ENCODE measurements at regions of chr19 and their contacts with region 1.

Region 1: DNA sequence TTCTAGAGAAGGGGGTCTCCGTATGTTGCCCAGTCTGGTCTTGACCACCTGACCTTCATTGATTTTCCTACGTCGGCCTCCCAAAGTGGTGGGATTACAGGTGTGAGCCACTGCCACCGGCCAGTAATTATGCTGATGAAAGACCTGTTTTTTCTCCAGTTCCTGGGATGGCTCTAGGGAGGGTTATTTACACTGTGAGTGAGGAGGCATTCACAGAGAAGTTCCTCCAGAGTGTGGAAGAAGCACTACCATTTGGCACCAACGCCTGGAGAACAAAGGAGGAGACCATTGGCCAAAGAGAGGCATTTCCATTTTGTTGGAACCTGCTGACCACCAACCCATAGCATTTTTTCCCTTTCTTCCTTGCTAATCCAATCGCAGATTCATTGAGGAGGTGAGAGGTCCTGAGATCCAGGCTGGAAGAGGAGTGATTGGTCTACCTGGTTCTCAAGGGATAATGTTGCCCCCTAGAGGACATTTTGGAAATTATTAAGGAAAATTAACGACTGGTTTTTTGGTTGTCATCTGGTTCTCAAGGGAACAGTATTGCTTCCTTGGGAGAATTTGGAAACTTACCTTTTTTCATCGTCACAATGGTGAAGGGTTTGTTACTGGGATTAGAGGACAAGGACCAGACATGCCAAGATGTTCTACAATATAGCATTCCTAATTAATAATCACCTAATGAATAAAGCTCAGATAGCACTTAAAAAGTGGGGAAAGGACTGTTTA is 5.5 kb upstream of the SAE1 start:
- DNase-seq: peak in 1 of 10 donors; percentile 16

Region 2: GRCh38 chr19:47035127-47036096 is 89.7 kb before region 1 on chr19:
- intact Hi-C with region 1: loop called (anchors 1 kb)
- DNase-seq: peak; percentile 78 to 98 (median 90)

Region 3: DNA sequence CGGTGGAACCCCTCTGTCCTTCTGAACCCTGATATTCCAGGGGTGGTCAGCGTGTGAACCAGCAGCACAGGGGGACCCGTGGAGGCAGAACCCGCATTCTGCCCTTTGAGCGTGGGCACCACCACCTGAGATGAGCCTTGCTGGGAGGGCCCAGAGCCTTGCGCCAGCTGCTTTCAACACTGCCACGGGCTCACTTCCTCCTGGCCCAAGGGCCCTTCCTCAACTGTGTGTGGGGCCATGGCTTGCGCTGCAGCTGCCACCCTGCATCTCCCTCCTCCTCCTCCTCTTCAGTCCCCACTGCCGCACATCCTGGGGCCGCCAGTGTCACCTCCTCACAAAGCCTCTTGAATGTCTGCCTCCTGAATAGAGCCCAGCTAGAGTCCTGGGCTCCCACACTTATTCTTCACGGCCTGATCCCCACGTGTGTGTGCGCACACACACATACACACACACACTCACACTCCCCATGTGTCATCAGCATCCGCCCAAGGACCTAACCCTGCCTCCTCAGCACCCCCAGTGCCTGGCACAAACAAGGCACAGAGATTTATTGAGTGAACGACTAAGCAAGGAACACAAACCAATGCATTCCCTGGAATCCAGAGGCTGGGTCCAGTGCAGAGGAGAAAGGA is 49.8 kb before region 1 on chr19:
- intact Hi-C with region 1: loop called (anchors 1 kb)
- DNase-seq: peak in 1 of 10 donors; percentile 47

Region 4: DNA sequence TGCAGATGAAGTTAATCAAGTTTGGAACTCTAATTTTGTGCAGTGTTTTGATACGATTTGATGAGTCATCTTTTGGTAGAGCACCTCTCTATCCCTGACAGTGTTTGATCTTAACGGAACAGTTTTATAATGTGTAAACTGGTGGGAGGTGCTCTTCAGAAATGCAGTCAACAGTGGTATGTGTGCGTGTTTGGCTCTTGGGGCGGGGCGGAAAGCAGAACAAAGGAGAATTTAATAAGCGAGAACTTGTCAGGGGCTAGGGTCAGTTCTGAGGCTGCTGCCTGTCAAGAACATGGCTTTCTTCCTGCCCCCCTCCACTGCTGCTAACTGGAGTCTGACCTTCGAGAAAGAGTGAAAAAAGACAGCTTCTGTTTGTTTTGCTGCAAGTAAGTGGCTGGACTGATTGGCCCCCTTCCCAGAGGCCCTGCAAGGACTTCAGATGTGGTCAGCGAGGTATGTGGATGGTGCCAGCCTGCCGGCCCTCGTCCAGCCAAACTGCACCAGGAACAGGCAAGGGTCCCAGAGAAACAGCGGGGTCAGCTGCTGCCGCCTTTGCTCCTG is 65.1 kb after region 1 on chr19:
- intact Hi-C with region 1: no loop called
- DNase-seq: peak; percentile 16 to 87 (median 52)

Region 5: GRCh38 chr19:47210689-47211316 is 85.7 kb after region 1 on chr19:
- intact Hi-C with region 1: no loop called
- DNase-seq: peak in 5 of 10 donors; percentile 62 to 87 (median 67)